Activated naive CD8-positive, alpha-beta T cell treated with anti-CD3 and anti-CD28 coated beads, Interleukin-2, amount 10 ng/mL, durations not matched to agents 7 days and 5 days (primary cell): ENCODE measurements at regions of chr10 and their contacts with region 1.

Region 1: GRCh38 chr10:70404036-70404786 is at the start of gene EIF4EBP2:
- DNase-seq: peak; percentile 100
- ATAC-seq: peak; percentile 82
- H3K4me3 Mint-ChIP-seq: peak within 1 kb of the TSS; percentile 89
- H3K27ac Mint-ChIP-seq: peak within 1 kb of the TSS; percentile 93
- H3K4me1 Mint-ChIP-seq: peaks cover 34% of the 10 kb centered on the region
- H3K27me3 Mint-ChIP-seq: no peaks in the 10 kb centered on the region
- total RNA-seq, gene EIF4EBP2: 49.3 to 54.2 TPM

Region 2: DNA sequence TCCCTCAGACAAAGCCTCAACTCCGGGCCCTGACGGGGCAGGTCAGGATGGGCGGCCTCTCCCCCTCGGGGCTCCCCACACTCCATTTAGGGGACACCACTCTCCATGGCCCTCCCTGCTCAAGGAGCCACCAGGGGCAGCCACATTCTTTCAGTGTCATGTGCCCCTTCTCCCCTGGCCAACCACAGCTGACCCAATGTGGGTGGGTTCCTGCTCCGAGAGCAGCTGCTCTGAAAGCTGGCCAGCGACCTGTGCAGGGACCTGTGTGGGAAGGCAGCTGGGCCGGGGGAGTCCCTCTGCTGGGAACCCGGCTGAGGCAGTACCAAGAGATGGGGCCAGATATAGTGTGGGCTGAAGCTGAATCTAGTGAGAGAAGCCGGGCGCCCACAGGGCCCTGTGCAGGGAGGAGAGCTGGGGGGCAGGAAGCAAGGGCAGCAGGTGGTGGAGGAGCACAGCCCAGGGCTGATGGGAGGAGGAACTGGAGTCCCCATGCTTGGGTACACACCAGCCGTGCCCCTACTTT is 79.8 kb before region 1 on chr10:
- POLR2A ChIA-PET with region 1: no interaction called
- DNase-seq: peak; percentile 55
- ATAC-seq: peak; percentile 52
- H3K4me3 Mint-ChIP-seq: peak overlapping the region; percentile 37
- H3K27ac Mint-ChIP-seq: peak overlapping the region; percentile 96
- H3K4me1 Mint-ChIP-seq: peaks cover 36% of the 10 kb centered on the region
- H3K27me3 Mint-ChIP-seq: no peaks in the 10 kb centered on the region

Region 3: GRCh38 chr10:70381471-70382421 is 22.5 kb before region 1 on chr10:
- POLR2A ChIA-PET with region 1: interaction called, 16 read pairs
- DNase-seq: peak; percentile 72
- ATAC-seq: peak; percentile 43
- H3K4me3 Mint-ChIP-seq: peak overlapping the region; percentile 89
- H3K27ac Mint-ChIP-seq: peak overlapping the region; percentile 70
- H3K4me1 Mint-ChIP-seq: peaks cover 14% of the 10 kb centered on the region
- H3K27me3 Mint-ChIP-seq: peaks cover 25% of the 10 kb centered on the region

Region 4: DNA sequence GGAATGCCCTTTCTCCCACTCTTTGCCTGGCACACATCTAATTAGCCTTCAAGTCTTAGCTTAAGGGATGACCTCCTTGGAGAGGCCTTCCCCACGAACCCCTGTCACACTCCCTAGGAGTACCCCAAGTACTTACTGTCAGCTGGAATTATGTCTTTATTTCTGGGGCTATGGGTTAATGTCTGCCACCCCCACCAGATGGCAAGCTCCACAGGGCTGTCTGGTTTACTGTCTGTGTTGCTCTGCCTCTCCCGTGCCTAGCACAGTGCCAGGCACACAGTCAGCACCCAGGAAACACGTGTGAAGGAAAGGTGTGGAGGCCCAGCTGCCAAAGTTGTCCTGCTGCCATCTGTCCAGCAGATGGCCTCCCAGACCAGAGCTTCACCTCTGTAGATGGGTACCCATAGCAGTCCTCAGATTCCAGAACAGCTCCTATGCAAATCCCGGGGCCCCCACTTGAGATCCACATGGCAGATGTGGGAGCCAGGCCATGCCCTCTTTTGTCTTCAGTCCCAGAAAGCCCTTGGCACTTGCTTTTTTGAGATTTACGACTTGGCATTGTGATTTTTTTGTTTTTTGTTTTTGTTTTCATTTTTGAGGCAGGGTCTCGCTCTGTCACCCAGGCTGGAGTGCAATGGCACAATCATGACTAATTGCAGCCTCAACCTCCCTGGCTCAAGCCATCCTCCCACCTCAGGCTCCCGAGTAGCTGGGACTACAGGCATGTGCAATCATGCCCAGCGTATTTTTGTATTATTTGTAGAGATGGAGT is 57.2 kb after region 1 on chr10:
- POLR2A ChIA-PET with region 1: no interaction called
- DNase-seq: peak; percentile 60
- ATAC-seq: peak; percentile 73
- H3K4me3 Mint-ChIP-seq: no peak overlapping the region
- H3K27ac Mint-ChIP-seq: no peak overlapping the region
- H3K4me1 Mint-ChIP-seq: peaks cover 1% of the 10 kb centered on the region
- H3K27me3 Mint-ChIP-seq: peaks cover 50% of the 10 kb centered on the region

Region 5: DNA sequence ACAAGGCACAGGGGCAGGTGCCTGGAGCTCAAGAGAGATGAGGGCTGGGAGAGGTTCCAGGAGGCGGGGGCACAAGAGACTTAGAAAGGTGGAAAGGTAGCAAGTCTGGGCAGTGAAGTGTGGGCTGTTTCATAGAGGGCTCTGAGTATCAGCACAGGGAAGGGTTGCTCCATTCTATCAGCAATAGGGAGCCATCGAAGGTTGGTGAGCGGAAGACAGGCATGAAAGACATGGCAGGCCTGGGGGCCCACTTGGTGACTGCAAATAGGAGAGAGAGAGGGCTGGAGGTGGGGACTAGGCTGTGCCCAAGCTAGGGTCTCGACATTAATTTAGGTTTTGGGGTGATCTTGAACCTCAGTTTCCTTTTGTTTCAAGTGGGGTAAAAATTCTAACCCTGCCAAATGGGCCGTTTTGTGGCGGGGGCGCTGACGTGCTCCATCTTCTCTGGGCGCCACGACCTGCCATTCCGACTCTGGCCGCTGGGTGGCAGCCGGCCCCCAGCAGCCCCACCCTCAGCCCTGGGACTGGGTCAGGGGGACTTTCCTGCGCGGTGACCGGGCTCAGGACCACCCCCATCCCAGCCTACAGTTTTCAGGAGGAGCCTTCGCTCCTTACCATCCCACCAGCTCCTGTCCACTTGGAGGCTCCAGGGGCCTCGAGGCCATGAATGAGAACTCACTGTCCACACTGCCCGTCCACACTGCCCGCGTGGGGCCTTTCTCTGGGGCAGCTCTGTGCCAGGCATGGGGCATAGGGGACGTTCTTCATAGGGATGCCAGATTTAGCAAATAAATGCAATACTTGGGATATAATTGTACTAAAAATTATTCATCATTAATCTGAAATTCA is 521.4 kb after region 1 on chr10:
- POLR2A ChIA-PET with region 1: no interaction called
- DNase-seq: peak; percentile 80
- ATAC-seq: peak; percentile 73
- H3K4me3 Mint-ChIP-seq: no peak overlapping the region
- H3K27ac Mint-ChIP-seq: no peak overlapping the region
- H3K4me1 Mint-ChIP-seq: peaks cover 2% of the 10 kb centered on the region
- H3K27me3 Mint-ChIP-seq: peaks cover 3% of the 10 kb centered on the region